ENCODE measurements at regions of chr10 and their contacts with region 1.

Region 1: DNA sequence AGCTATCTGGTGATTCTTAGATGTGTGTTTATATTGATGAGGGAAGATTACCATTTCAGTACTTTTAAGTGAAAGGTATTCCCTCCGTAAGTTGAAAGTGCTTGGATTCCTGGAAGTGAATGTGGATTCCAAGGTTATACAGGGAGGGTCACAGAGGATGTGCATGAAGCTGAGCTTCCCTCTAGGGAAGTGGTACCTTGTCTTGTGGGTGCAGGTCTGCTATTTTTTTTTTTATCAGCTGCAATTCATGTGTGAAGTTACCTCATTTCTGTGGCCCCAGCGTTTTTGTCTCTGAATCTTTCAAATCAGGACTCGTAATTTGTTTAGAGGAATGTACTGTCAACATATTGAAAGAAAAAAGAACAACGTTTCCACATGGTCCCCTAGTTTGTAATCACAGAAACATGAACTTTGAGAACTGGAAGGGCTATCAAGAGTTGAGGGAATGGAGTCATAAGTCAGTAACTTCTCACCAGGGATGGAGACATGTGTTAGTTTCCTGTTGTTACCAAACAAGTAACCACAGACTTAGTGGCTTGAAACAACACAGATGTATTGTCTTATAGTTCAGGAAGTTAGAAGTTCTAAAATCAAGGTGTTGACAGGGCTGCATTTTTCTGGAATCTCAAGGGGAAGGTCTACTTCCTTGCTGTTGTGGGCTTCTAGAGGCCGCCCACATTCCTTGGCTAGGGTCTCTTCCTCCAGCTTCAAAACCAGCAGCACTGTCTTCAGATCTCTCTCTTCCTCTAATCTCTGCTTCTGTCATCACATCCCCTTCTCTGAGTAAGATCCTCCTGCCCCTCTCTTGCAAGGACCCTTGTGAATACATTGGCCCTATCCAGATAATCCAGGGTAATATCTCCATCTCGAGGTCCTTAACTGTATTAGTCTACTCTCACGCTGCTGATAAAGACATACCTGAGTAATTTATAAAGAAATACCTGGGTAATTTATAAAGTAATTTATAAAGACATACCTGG is 64.4 kb downstream of the RAB18 start:
- DNase-seq: no peak
- H3K4me3 ChIP-seq: no peak overlapping the region
- H3K27ac ChIP-seq: no peak overlapping the region
- H3K4me1 ChIP-seq: no peaks in the 10 kb centered on the region
- H3K27me3 ChIP-seq: no peaks in the 10 kb centered on the region
- CTCF ChIP-seq: no peak

Region 2: DNA sequence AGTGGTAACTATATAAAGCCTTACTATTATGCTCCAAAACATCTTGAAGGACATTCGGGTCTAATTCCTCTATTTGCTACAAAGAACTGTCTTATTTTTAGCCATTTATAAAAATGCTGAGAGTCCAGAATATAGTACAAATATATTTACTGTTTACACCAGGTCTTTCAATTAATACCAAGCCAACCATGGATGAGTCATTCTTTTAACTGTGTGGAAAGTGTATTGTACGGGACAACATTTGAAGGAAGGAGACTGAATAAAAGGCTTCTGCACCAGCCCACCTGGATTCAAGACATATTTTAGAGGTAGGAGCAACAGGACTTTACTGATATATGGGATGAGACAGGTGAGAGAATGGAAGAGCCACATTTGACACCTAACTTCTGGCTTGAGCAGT is 378.0 kb before region 1 on chr10:
- CTCF ChIA-PET with region 1: no interaction called
- dilution Hi-C with region 1: no loop called
- in situ Hi-C with region 1: no loop called
- intact Hi-C with region 1: no loop called
- DNase-seq: no peak
- H3K4me3 ChIP-seq: no peak overlapping the region
- H3K27ac ChIP-seq: no peak overlapping the region
- H3K4me1 ChIP-seq: no peaks in the 10 kb centered on the region
- H3K27me3 ChIP-seq: no peaks in the 10 kb centered on the region
- CTCF ChIP-seq: no peak

Region 3: DNA sequence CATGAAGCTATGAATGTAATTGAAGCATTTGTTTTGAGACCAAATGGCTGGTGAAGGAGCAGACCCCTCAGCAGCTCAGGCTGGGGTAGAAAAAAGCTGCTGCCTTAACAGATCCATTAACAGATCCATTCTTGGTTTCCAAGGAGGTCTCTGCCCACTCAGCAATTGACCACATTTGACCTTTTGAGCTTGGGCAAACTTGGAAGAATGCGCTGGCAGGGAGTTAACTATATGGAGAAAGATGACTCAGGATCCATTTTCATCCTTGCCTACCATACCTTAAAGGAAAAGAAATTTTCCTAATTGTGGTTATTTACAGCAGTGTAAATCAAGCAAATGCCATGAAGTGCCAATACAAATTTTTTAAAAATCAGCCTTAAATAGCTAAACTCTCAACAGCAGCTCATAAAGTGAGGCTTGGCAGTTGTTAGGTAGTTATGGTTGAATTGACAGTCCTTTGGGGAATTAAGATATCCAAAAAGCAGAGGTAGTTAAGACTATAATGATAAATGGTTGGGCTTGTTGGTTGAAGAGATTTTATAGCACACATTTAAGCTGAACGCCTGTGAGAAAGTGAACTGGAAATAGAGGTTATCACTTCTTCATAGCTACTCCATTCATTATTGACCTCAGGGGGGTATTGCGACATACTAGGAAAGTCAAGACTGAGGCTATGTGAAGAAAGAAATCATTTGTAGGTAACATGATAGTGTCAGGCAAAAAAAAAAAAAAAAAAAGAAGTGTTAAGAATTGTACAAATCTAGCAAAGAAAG is 93.2 kb after region 1 on chr10:
- CTCF ChIA-PET with region 1: no interaction called
- dilution Hi-C with region 1: loop called (anchors 5 kb)
- in situ Hi-C with region 1: no loop called
- intact Hi-C with region 1: no loop called
- DNase-seq: peak; percentile 4
- H3K4me3 ChIP-seq: no peak overlapping the region
- H3K27ac ChIP-seq: no peak overlapping the region
- H3K4me1 ChIP-seq: no peaks in the 10 kb centered on the region
- H3K27me3 ChIP-seq: no peaks in the 10 kb centered on the region
- CTCF ChIP-seq: no peak

Region 4: GRCh38 chr10:28090506-28090905 is 522.0 kb after region 1 on chr10:
- CTCF ChIA-PET with region 1: interaction called, 10 read pairs
- dilution Hi-C with region 1: no loop called
- in situ Hi-C with region 1: no loop called
- intact Hi-C with region 1: no loop called
- DNase-seq: no peak
- H3K4me3 ChIP-seq: no peak overlapping the region
- H3K27ac ChIP-seq: no peak overlapping the region
- H3K4me1 ChIP-seq: peaks cover 13% of the 10 kb centered on the region
- H3K27me3 ChIP-seq: no peaks in the 10 kb centered on the region
- CTCF ChIP-seq: no peak

Measured in mammary epithelial cell (primary cell).